Right cardiac atrium (tissue), 5 donors: ENCODE measurements at regions of chr10 and their contacts with region 1.

Region 1: GRCh38 chr10:61063034-61063433 is 119.0 kb upstream of the RHOBTB1 start:
- DNase-seq: peak in 1 of 3 donors; percentile 22
- ATAC-seq: peak in 1 of 2 donors; percentile 36
- H3K4me3 ChIP-seq: no peak overlapping the region
- H3K27ac ChIP-seq: no peak overlapping the region
- H3K4me1 ChIP-seq: no peaks in the 10 kb centered on the region
- H3K27me3 ChIP-seq: no peaks in the 10 kb centered on the region

Region 2: GRCh38 chr10:61159253-61159652 is 96.2 kb after region 1 on chr10:
- intact Hi-C with region 1: loop called in 1 of 4 experiments (anchors 10 kb)
- DNase-seq: no peak
- ATAC-seq: no peak
- H3K4me3 ChIP-seq: no peak overlapping the region
- H3K27ac ChIP-seq: no peak overlapping the region
- H3K4me1 ChIP-seq: no peaks in the 10 kb centered on the region
- H3K27me3 ChIP-seq: no peaks in the 10 kb centered on the region